ENCODE measurements at regions of chr3 and their contacts with region 1.

Region 1: DNA sequence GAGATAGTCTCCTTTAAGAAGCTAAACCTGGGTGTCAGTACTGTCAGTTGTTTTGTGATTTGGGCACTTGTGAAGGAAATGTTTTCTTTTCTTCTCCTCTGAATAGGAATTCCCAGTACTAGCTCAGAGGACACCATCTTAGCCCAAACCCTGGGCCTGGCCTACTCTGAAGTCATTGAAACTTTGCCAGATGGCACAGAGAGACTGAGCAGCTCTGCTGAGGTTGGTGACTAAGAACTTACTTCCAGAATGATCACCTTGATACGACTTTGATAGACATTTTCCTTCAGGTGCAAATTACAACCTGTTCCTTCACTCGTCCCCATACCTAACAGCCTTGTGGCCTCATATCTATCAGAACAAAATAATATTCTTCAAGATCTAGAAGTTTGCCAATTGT is 100.2 kb downstream of the LARS2 start:
- DNase-seq: no peak
- H3K4me3 Mint-ChIP-seq: no peak overlapping the region
- H3K27ac Mint-ChIP-seq: no peak overlapping the region
- H3K4me1 Mint-ChIP-seq: peaks cover 4% of the 10 kb centered on the region
- H3K27me3 Mint-ChIP-seq: no peaks in the 10 kb centered on the region

Region 2: DNA sequence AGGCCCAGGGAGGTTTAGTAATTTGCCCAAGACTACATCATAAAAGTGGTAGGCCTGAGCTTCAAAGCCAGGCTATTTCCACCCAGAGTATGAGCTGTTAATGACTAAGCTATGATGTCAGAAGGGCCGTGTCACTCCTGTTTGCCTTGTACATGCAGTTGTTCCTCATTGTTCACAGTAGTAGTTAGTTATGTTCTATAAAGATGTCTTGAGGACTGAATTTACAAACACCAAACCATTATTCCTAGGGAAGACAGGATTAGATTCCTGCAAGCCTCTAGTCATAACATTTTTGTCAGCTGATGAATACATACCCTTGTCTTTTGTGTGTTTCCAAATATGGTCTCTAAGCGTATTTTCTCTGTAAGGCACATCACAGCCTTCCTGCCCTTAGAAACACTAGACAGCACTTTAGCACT is 121.1 kb before region 1 on chr3:
- intact Hi-C with region 1: no loop called
- DNase-seq: no peak
- H3K4me3 Mint-ChIP-seq: no peak overlapping the region
- H3K27ac Mint-ChIP-seq: no peak overlapping the region
- H3K4me1 Mint-ChIP-seq: no peaks in the 10 kb centered on the region
- H3K27me3 Mint-ChIP-seq: peaks cover 14% of the 10 kb centered on the region

Region 3: GRCh38 chr3:45464336-45465170 is 24.0 kb before region 1 on chr3:
- intact Hi-C with region 1: loop called (anchors 1 kb)
- DNase-seq: peak; percentile 76
- H3K4me3 Mint-ChIP-seq: no peak overlapping the region
- H3K27ac Mint-ChIP-seq: no peak overlapping the region
- H3K4me1 Mint-ChIP-seq: peaks cover 34% of the 10 kb centered on the region
- H3K27me3 Mint-ChIP-seq: no peaks in the 10 kb centered on the region

Region 4: DNA sequence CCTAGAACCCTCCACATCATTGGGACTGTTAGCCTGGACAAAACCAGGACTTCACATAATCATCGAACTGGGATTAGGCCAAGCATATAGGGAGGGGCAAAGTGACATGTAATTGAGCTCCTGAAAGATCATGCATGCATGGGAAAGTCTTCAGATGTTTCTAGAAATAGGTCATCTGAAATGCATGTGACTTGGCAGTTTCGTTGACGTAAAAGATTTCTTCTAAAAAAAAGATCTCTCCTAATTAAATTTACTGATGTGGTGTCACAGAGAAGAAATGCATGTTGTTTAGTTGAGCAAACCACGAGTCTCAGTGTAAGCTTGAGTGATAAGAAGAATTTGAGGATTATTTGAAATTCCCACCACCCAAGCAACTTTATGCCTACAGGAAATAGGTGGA is 36.0 kb after region 1 on chr3:
- intact Hi-C with region 1: no loop called
- DNase-seq: no peak
- H3K4me3 Mint-ChIP-seq: no peak overlapping the region
- H3K27ac Mint-ChIP-seq: no peak overlapping the region
- H3K4me1 Mint-ChIP-seq: peaks cover 14% of the 10 kb centered on the region
- H3K27me3 Mint-ChIP-seq: no peaks in the 10 kb centered on the region